ENCODE measurements at regions of chr14 and their contacts with region 1.

Region 1: DNA sequence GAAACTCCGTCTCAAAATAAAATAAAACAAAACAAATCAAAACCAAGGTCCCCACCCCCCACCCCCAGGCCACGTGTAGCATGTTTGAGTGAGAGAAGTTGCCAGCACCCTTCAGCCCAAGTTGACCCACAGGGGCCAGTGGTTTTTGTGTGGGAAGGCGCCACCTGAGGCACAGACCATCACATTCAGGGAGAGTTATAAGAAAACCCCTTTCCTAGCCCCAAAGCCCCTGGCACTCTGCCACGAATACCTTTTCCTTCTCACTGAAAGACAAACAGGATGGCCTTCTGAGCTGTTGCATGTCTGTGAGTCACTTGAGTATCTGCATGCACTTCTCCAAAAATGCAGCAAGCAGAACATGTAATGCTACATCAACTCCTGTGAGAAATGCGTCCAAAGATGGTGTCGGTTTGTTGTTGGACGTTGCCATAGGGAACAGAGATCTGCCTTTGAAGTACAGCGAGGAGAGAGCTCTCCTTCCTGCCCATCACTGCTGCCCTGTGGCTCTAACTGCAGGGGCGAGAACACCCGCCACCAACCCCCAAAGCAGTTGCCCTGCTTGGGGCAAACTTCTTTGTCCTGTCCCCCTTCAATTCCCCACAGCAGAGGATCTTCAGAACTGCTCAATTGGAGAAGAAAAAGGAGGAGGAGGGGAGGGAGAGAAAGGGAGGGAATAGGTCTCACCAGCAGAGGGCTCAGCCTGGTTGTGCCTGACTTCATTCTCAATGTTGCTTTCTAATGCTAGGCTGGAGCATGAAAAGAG is 2.7 kb upstream of the TRAF3 start:
- DNase-seq: no peak
- H3K4me3 ChIP-seq: no peak overlapping the region
- H3K27ac ChIP-seq: peak overlapping the region; percentile 13 to 85 (median 56)
- H3K4me1 ChIP-seq: peaks cover 11 to 33% (median 18%) of the 10 kb centered on the region in 4 donors
- H3K27me3 ChIP-seq: no peaks in the 10 kb centered on the region
- CTCF ChIP-seq: peak; percentile 65 to 82 (median 66)
- EP300 ChIP-seq: no peak
- POLR2A ChIP-seq: no peak

Region 2: DNA sequence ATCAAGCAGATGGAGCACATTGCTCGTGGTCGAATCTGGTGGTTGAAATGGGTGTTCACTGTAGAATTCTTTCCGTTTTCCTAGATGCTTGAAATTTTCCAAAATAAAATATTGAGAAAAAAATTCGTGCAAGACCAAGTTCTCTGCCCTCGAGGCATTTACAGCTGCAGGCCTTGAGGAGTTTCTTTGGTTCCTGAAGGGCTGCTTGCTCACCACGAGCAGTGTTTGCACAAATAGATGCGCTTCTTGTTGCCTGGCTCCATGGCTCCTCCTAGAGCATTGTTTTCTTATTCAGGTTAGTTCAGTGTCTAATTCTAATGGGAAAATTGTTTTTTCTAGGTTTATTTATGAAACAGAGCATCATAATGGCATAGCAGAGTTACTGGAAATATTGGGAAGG is 884.7 kb before region 1 on chr14:
- intact Hi-C with region 1: no loop called
- DNase-seq: no peak
- H3K4me3 ChIP-seq: no peak overlapping the region
- H3K27ac ChIP-seq: no peak overlapping the region
- H3K4me1 ChIP-seq: no peaks in the 10 kb centered on the region
- H3K27me3 ChIP-seq: no peaks in the 10 kb centered on the region
- CTCF ChIP-seq: peak in 2 of 3 experiments; percentile 9 to 10
- EP300 ChIP-seq: no peak
- POLR2A ChIP-seq: no peak

Region 3: GRCh38 chr14:102878174-102878969 is 103.8 kb after region 1 on chr14:
- intact Hi-C with region 1: no loop called
- DNase-seq: no peak
- H3K4me3 ChIP-seq: no peak overlapping the region
- H3K27ac ChIP-seq: no peak overlapping the region
- H3K4me1 ChIP-seq: no peaks in the 10 kb centered on the region
- H3K27me3 ChIP-seq: no peaks in the 10 kb centered on the region
- CTCF ChIP-seq: no peak
- EP300 ChIP-seq: no peak
- POLR2A ChIP-seq: no peak

Region 4: DNA sequence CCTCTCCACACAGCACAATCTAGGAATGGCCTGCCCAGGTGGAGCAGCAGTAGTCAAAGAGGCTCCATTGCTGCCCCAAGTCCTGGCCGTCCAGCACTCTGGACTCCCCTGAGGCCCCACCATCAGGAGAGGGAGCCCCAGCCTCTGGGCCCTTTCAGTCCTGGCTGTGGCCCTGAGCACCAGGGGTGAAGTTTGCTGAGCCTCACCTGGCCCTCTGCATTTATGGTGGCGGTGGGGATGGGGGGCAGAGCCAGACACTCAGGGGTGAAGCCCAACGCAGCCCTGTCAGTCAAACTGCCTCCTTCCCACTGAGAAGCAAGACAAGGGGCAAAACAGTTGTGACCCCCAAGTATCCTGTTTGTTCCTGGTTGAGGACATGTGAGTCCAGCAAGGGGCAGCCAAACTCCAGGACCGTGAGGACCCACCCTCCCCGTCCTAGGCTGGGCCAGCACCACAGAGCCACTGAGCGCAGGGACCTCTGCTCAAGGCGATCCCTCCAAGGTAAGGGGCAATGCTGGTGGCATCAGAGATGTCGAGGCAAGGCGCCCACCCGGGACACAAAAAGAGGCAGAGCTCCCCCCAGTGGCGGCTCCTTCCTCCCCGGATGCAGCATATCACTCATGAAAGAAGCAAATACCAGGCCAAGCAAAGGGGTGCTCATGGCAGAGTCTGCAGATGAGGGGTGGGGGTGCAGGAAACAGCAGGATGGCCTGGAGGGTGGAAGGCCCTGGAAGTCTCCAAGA is 143.1 kb after region 1 on chr14:
- intact Hi-C with region 1: loop called (anchors 10 kb)
- DNase-seq: no peak
- H3K4me3 ChIP-seq: no peak overlapping the region
- H3K27ac ChIP-seq: no peak overlapping the region
- H3K4me1 ChIP-seq: peaks cover under 1 to 3% (median 1%) of the 10 kb centered on the region in 4 donors
- H3K27me3 ChIP-seq: peaks cover 0 to 14% (median 2%) of the 10 kb centered on the region in 4 donors
- CTCF ChIP-seq: peak; percentile 62 to 69 (median 62)
- EP300 ChIP-seq: no peak
- POLR2A ChIP-seq: no peak

Region 5: GRCh38 chr14:103057365-103058096 is 283.0 kb after region 1 on chr14 and contains the start of gene CDC42BPB:
- intact Hi-C with region 1: loop called (anchors 5 kb)
- DNase-seq: peak; percentile 94
- H3K4me3 ChIP-seq: peak within 1 kb of the TSS; percentile 88 to 99 (median 98)
- H3K27ac ChIP-seq: peak within 1 kb of the TSS; percentile 89 to 98 (median 96)
- H3K4me1 ChIP-seq: peaks cover 34 to 66% (median 57%) of the 10 kb centered on the region in 4 donors
- H3K27me3 ChIP-seq: no peaks in the 10 kb centered on the region
- CTCF ChIP-seq: no peak
- EP300 ChIP-seq: no peak
- POLR2A ChIP-seq: no peak
- total RNA-seq, gene CDC42BPB: 93.9 to 132 (median 110) TPM